ENCODE measurements at regions of chr4 and their contacts with region 1.

Region 1: DNA sequence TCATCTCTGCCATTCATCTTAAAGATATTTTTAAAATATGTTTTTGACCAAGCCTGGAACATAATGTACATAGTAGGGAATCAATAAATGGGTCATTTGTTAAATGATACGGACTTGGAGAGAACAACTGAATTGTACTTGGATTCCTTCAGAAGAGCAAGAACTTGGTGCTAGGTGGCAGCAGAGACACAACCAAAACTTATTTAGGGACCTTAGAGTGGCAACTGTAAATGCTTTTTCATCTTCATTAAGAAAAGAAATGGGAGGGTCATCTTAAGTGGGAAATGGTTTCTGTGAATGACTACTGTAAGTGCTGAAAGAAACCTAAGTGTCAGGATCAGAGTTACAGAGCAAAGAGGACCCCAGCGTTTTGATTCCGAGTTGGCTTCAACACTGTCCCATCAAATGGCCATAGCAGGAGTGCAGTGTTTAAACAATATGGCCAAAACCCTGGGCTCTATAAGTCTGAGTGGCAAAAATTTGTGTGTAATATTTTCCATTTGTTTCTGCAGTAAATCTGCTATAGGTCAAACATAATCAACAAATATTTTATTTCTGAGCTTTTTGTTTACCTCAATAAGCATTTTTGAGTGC is 213.6 kb downstream of the PALLD start:
- DNase-seq: no peak
- H3K4me3 ChIP-seq: no peak overlapping the region
- H3K27me3 ChIP-seq: no peaks in the 10 kb centered on the region
- CTCF ChIP-seq: peak; percentile 69

Region 2: GRCh38 chr4:168743601-168744000 is 33.2 kb after region 1 on chr4:
- CTCF ChIA-PET with region 1: no interaction called
- POLR2A ChIA-PET with region 1: no interaction called
- DNase-seq: no peak
- H3K4me3 ChIP-seq: no peak overlapping the region
- H3K27me3 ChIP-seq: no peaks in the 10 kb centered on the region
- CTCF ChIP-seq: no peak

Region 3: DNA sequence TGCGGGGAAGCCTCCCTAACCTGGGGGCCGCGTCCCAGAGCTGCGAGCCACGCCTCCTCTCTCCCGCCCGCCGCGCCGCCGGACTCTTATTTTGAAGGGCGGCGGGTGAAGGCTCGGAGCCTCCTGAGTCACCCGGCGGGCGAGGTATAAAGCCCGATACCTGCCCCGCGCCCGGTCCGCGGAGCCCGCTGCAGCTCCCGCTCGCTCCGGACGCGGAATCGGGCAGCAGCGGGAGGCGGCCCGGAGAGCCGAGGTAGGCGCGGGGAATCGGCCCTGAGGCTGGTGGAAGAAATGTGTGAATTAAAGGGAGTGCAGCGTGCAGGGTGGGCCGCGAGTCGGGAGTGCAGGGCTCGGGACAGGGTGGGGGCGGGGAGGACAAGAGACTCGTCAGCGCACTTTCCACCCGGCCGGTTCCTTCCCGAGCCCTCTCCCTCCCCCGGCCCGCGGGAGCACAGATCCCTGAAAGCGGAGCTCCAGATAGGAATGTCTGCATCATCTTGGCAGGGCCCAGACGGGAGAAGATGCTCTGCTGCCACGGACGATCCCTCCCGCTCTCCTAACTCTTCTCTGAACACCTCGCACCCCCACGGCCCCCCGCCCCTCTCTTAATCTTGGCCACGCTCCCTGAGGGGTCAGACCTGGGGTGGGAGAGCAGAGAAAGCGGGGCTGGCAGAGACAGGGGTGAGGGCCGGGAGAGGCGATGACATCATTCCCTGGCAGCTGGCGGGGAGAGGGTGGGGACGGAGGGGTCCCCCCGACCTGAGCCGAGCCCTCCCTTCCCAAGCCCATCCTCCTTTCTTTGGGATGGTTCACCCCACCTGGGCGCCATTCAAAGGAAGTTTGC is 121.7 kb after region 1 on chr4:
- CTCF ChIA-PET with region 1: interaction called, 11 read pairs
- POLR2A ChIA-PET with region 1: interaction called, 3 read pairs
- DNase-seq: no peak
- H3K4me3 ChIP-seq: peak overlapping the region; percentile 95
- H3K27me3 ChIP-seq: no peaks in the 10 kb centered on the region
- CTCF ChIP-seq: no peak